ENCODE measurements at regions of chr22 and their contacts with region 1.

Region 1: GRCh38 chr22:19479357-19480172 is at the start of gene CDC45:
- DNase-seq: peak; percentile 94 to 98 (median 97)
- ATAC-seq: peak; percentile 97 to 99 (median 98)
- H3K4me3 ChIP-seq: peak within 1 kb of the TSS; percentile 74 to 96 (median 86)
- H3K27ac ChIP-seq: peak within 1 kb of the TSS; percentile 94 to 99 (median 98)
- H3K4me1 ChIP-seq: peaks cover 6 to 30% (median 22%) of the 10 kb centered on the region in 12 donors
- H3K27me3 ChIP-seq: no peaks in the 10 kb centered on the region
- CTCF ChIP-seq: no peak
- POLR2A ChIP-seq: no peak
- total RNA-seq, gene CDC45: 0.16 to 3.1 (median 0.32) TPM in 5 of 9 donors, not detected in the others

Region 2: GRCh38 chr22:18954990-18955571 is 524.5 kb before region 1 on chr22:
- intact Hi-C with region 1: loop called in 1 of 10 experiments (anchors 10 kb)
- DNase-seq: peak in 2 of 5 donors; percentile 6 to 48
- ATAC-seq: no peak
- H3K4me3 ChIP-seq: no peak overlapping the region
- H3K27ac ChIP-seq: no peak overlapping the region
- H3K4me1 ChIP-seq: no peaks in the 10 kb centered on the region
- H3K27me3 ChIP-seq: peaks cover 0 to 11% (median 0%) of the 10 kb centered on the region in 9 donors
- CTCF ChIP-seq: no peak
- POLR2A ChIP-seq: no peak

Region 3: GRCh38 chr22:19178656-19179496 is 300.7 kb before region 1 on chr22 and contains the start of gene SLC25A1:
- intact Hi-C with region 1: loop called in 2 of 10 experiments (anchors 5 kb)
- DNase-seq: peak; percentile 92 to 97 (median 94)
- ATAC-seq: peak; percentile 81 to 91 (median 89)
- H3K4me3 ChIP-seq: peak within 1 kb of the TSS; percentile 77 to 99 (median 88)
- H3K27ac ChIP-seq: peak within 1 kb of the TSS; percentile 74 to 92 (median 86)
- H3K4me1 ChIP-seq: peaks cover 8 to 47% (median 31%) of the 10 kb centered on the region in 12 donors
- H3K27me3 ChIP-seq: no peaks in the 10 kb centered on the region
- CTCF ChIP-seq: no peak
- POLR2A ChIP-seq: no peak
- total RNA-seq, gene SLC25A1: 16.1 to 35.8 (median 24.6) TPM

Region 4: DNA sequence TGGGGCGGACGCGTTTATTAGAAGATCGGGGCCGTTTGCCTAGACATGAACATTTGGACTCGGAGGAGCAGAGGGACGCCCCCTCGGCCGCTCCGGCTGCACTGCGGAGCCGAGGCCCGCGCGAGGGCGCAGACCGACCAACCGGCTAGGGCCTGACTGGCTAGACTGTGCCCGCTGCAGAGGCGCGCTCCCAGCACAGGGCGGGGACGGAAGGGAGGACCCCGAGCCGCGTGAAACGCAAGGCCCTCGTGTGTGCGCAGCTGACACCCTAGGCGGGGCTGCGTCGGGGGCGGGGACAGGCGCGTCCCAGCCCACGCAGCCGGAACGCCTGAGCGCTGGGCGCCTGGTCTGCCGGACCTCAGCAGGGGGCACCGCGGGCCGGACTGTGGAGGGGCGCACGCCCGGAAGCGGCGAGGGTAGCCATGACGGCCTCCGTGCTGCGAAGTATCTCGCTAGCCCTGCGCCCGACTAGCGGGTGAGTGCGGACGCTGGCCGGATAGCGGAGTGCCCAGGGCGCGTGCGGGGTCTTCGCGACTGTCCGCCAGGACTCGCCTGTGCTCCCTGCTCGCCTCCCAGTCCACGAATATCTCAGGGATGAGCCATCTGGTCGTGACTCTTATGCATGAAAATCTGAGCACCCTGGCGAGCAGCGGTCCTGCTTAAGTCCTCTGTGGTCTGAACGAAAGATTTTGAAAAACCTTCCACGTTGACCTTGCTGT is 47.3 kb before region 1 on chr22 and contains the start of gene MRPL40:
- intact Hi-C with region 1: loop called in 6 of 10 experiments (anchors 2 to 5 kb)
- DNase-seq: peak; percentile 95 to 98 (median 97)
- ATAC-seq: peak; percentile 95 to 98 (median 98)
- H3K4me3 ChIP-seq: peak within 1 kb of the TSS; percentile 62 to 95 (median 86)
- H3K27ac ChIP-seq: peak within 1 kb of the TSS; percentile 93 to 99 (median 98)
- H3K4me1 ChIP-seq: peaks cover 7 to 46% (median 29%) of the 10 kb centered on the region in 12 donors
- H3K27me3 ChIP-seq: no peaks in the 10 kb centered on the region
- CTCF ChIP-seq: peak in 4 of 12 donors; percentile 15 to 28 (median 21)
- POLR2A ChIP-seq: peak in 1 of 2 donors; percentile 86
- total RNA-seq, gene MRPL40: 39.9 to 62.7 (median 54.2) TPM

Region 5: GRCh38 chr22:19717691-19718455 is 238.3 kb after region 1 on chr22:
- intact Hi-C with region 1: loop called in 1 of 10 experiments (anchors 5 kb)
- DNase-seq: peak; percentile 71 to 90 (median 83)
- ATAC-seq: peak; percentile 9 to 76 (median 53)
- H3K4me3 ChIP-seq: peak overlapping the region; percentile 61 to 83 (median 66)
- H3K27ac ChIP-seq: peak overlapping the region; percentile 74 to 99 (median 91)
- H3K4me1 ChIP-seq: peaks cover 0 to 86% (median 37%) of the 10 kb centered on the region in 12 donors
- H3K27me3 ChIP-seq: peaks cover 0 to 58% (median 6%) of the 10 kb centered on the region in 9 donors
- CTCF ChIP-seq: peak; percentile 90 to 100 (median 98)
- POLR2A ChIP-seq: peak in 1 of 2 donors; percentile 22

Region 6: GRCh38 chr22:19909350-19910179 is 430.0 kb after region 1 on chr22:
- intact Hi-C with region 1: no loop called
- DNase-seq: peak; percentile 76 to 88 (median 82)
- ATAC-seq: peak; percentile 89 to 93 (median 92)
- H3K4me3 ChIP-seq: no peak overlapping the region
- H3K27ac ChIP-seq: no peak overlapping the region
- H3K4me1 ChIP-seq: no peaks in the 10 kb centered on the region
- H3K27me3 ChIP-seq: no peaks in the 10 kb centered on the region
- CTCF ChIP-seq: peak; percentile 77 to 94 (median 82)
- POLR2A ChIP-seq: no peak

Measured in heart left ventricle (tissue), 16 donors.